ENCODE measurements at regions of chr17 and their contacts with region 1.

Region 1: DNA sequence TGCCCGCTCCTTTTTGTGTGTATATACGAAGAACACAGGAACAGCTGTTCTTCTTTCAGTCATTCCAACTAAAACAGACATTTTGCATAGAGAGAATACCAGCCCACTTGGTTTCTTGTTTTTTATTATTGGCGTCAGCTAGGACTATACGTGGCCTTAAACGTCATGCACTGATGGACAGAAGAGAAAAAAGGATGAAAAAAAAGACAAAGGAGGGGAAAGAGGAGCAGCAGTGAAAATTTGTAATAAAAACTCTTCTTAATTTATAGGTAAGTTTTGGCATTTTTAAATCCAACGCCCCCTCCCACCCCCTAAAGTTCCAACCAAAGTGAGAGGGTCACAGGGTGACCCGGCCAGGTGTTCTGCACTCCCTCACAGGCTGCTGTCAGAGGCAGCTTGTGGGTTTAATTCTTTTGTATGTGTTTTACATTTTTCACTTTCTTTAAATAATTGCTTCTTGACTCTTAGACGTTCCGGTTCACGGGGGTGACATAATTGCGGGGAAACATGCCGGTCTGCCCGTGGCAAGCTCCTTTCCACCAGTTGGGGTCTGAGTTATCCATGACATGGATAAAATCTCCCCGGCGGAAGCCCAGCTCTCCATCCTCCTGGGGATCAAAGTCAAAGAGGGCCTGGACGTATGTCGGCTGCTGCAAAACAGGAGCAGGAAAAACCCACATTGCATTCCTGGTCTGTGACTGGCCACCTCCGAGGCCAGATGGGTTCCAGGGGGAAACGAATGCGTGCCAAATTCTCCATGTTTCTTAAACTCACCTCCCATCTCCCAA is 30.9 kb upstream of the SLC25A19 start:
- DNase-seq: no peak
- H3K4me3 ChIP-seq: no peak overlapping the region
- H3K27ac ChIP-seq: no peak overlapping the region
- H3K4me1 ChIP-seq: no peaks in the 10 kb centered on the region
- H3K27me3 ChIP-seq: no peaks in the 10 kb centered on the region
- CTCF ChIP-seq: no peak
- POLR2A ChIP-seq: no peak

Region 2: DNA sequence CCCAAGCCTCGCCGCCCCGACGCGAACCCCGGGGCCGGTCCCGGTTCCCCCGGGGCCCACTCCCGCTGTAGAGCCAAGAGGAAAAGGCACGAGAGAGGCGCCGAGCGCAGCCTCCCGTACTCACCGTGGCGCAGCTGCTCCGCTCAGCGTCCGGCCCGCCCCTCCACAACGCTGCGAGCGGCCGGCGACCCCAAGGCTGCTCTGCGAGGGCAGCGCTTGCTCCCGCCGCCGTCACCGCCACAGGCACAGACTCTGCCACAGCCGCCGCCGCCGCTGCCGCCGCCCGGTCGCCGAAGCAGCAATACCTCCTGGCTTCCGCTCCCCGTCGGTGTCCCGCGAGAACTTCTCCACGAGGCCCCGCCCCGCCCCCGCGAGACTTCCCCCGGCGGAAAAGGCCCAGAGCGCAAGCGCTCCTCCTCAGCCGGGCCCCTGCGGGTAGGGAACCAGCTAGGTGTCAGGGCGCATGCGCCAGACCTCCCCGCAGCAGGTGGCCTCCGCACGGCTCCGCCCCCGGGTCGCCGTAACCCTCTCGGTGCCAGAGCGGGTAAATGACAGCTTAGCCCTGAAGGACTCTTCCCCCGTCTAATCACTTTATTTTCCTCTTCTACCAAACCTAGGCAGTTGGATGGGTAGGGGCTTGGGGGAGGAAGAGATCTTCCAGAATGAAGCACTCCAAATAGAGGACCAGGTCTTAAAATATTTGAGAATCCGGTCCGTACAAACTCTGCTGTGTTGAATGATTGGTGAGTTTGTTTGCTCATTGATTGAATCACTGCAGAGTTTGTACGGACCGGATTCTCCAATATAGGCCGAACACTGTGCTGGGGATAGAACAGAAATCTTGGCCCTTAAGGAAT is 85.5 kb after region 1 on chr17 and contains the start of gene GRB2:
- intact Hi-C with region 1: loop called (anchors 10 kb)
- DNase-seq: peak; percentile 97 to 99
- H3K4me3 ChIP-seq: peak within 1 kb of the TSS; percentile 94 to 99 (median 98)
- H3K27ac ChIP-seq: peak within 1 kb of the TSS; percentile 81 to 91
- H3K4me1 ChIP-seq: peaks cover 0 to 13% of the 10 kb centered on the region in 2 donors
- H3K27me3 ChIP-seq: no peaks in the 10 kb centered on the region
- CTCF ChIP-seq: no peak
- POLR2A ChIP-seq: no peak
- total RNA-seq, gene GRB2: 72.4 to 104 (median 77.1) TPM